ENCODE measurements at regions of chr17 and their contacts with region 1.

Region 1: GRCh38 chr17:40015005-40015997 is at the start of gene CSF3:
- DNase-seq: no peak
- H3K4me3 ChIP-seq: no peak within 1 kb of the TSS
- H3K27ac ChIP-seq: peak within 1 kb of the TSS; percentile 2
- H3K27me3 ChIP-seq: no peaks in the 10 kb centered on the region
- CTCF ChIP-seq: no peak
- polyA plus RNA-seq, gene CSF3: 0.05 TPM in 1 of 2 replicates, not detected in the other

Region 2: GRCh38 chr17:40086150-40087044 is 71.1 kb after region 1 on chr17:
- CTCF ChIA-PET with region 1: interaction called, 10 read pairs
- POLR2A ChIA-PET with region 1: no interaction called
- DNase-seq: no peak
- H3K4me3 ChIP-seq: no peak overlapping the region
- H3K27ac ChIP-seq: no peak overlapping the region
- H3K27me3 ChIP-seq: no peaks in the 10 kb centered on the region
- CTCF ChIP-seq: peak; percentile 81

Region 3: GRCh38 chr17:40287494-40288369 is 272.4 kb after region 1 on chr17 and contains the start of gene CDC6:
- CTCF ChIA-PET with region 1: interaction called, 10 read pairs
- POLR2A ChIA-PET with region 1: no interaction called
- DNase-seq: peak; percentile 97
- H3K4me3 ChIP-seq: peak within 1 kb of the TSS; percentile 81
- H3K27ac ChIP-seq: peak within 1 kb of the TSS; percentile 4
- H3K27me3 ChIP-seq: no peaks in the 10 kb centered on the region
- CTCF ChIP-seq: no peak
- polyA plus RNA-seq, gene CDC6: 8.6 and 9.1 TPM in 2 replicates